Left lung (tissue), 14 donors: ENCODE measurements at regions of chr2 and their contacts with region 1.

Region 1: DNA sequence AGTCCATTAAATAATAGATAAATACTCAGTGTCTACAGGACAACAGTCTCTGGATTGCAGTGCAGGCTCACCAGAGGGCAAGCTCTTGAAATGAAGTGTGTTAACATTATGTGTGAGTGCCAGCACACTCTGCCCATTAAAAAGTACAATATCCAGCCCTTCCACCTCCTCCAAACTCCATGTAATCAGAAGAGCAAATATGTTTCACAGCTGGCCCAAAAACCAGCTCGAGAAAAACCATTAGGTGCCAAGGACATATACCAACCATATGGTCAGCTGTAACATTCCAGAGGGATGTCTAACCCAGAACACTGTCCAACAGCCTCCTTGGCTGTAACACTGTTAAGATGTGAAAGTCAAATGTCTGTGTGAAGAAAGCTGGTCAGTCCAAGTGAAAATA is 112.2 kb downstream of the ZNF385B start:
- DNase-seq: no peak
- ATAC-seq: peak; percentile 70
- H3K4me3 ChIP-seq: no peak overlapping the region
- H3K27ac ChIP-seq: no peak overlapping the region
- H3K4me1 ChIP-seq: peaks cover 4 to 7% of the 10 kb centered on the region in 2 donors
- H3K27me3 ChIP-seq: no peaks in the 10 kb centered on the region
- CTCF ChIP-seq: no peak

Region 2: GRCh38 chr2:179422037-179422643 is 327.1 kb before region 1 on chr2:
- intact Hi-C with region 1: loop called in 1 of 2 experiments (anchors 10 kb)
- DNase-seq: peak in 3 of 4 donors; percentile 47 to 79 (median 64)
- ATAC-seq: peak; percentile 96
- H3K4me3 ChIP-seq: no peak overlapping the region
- H3K27ac ChIP-seq: no peak overlapping the region
- H3K4me1 ChIP-seq: no peaks in the 10 kb centered on the region
- H3K27me3 ChIP-seq: no peaks in the 10 kb centered on the region
- CTCF ChIP-seq: peak; percentile 58 to 78

Region 3: GRCh38 chr2:179584760-179585159 is 164.4 kb before region 1 on chr2:
- intact Hi-C with region 1: no loop called
- DNase-seq: no peak
- ATAC-seq: no peak
- H3K4me3 ChIP-seq: no peak overlapping the region
- H3K27ac ChIP-seq: no peak overlapping the region
- H3K4me1 ChIP-seq: peaks cover 0 to 4% of the 10 kb centered on the region in 2 donors
- H3K27me3 ChIP-seq: no peaks in the 10 kb centered on the region
- CTCF ChIP-seq: no peak

Region 4: GRCh38 chr2:180101846-180102245 is 352.6 kb after region 1 on chr2:
- intact Hi-C with region 1: no loop called
- DNase-seq: no peak
- ATAC-seq: no peak
- H3K4me3 ChIP-seq: no peak overlapping the region
- H3K27ac ChIP-seq: no peak overlapping the region
- H3K4me1 ChIP-seq: no peaks in the 10 kb centered on the region
- H3K27me3 ChIP-seq: no peaks in the 10 kb centered on the region
- CTCF ChIP-seq: no peak